ENCODE measurements at regions of chr12 and their contacts with region 1.

Region 1: GRCh38 chr12:4276524-4277204 is 3.1 kb downstream of the CCND2 start:
- H3K4me3 ChIP-seq: no peak overlapping the region
- H3K27ac ChIP-seq: no peak overlapping the region
- H3K4me1 ChIP-seq: peaks cover 18% of the 10 kb centered on the region
- CTCF ChIP-seq: peak; percentile 87

Region 2: GRCh38 chr12:3964439-3964838 is 312.2 kb before region 1 on chr12:
- CTCF ChIA-PET with region 1: interaction called, 17 read pairs
- POLR2A ChIA-PET with region 1: no interaction called
- H3K4me3 ChIP-seq: no peak overlapping the region
- H3K27ac ChIP-seq: no peak overlapping the region
- H3K4me1 ChIP-seq: no peaks in the 10 kb centered on the region
- CTCF ChIP-seq: no peak

Region 3: GRCh38 chr12:3998968-3999826 is 277.5 kb before region 1 on chr12:
- CTCF ChIA-PET with region 1: interaction called, 61 read pairs
- POLR2A ChIA-PET with region 1: interaction called, 3 read pairs
- H3K4me3 ChIP-seq: no peak overlapping the region
- H3K27ac ChIP-seq: no peak overlapping the region
- H3K4me1 ChIP-seq: no peaks in the 10 kb centered on the region
- CTCF ChIP-seq: no peak

Region 4: DNA sequence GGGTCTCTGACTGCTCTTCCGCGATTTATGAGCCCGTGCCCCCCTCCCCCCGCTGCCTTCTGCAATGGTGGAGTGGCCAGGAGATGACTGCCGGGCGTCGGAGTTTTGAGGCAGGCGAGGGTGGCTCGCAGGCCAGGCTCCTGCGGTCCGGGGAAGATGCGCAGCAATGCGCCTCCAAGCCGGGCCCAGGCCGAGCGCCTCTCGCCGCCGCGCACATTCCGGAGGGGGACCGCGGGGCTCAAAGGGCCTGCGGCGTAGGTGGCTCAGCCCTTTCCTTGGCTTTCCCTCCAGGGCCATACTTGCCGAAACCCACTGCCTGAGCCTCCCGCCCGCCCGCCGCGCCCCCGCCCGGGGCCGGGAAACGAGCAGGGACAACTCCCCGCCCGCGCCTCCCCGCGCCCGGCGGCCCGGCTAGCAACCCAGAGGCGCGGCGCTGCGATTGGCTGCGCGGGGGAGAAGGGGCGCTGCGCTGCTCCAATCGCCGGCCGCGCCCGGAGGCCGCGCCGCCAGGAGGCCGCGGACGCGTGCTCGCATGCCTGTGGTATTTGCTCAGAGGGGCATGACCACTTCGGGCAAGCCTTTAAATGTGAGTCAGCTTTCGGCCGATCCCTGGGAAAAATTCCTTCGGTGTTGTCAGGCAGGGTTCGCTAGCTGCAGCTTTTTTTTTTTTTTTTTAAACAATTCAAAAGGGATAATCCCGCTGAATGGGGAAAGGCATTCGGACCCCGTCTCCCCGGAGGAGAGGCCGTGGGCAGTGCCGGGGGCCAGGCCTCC is 245.5 kb before region 1 on chr12:
- CTCF ChIA-PET with region 1: interaction called, 39 read pairs
- POLR2A ChIA-PET with region 1: interaction called, 4 read pairs
- H3K4me3 ChIP-seq: peak overlapping the region; percentile 27
- H3K27ac ChIP-seq: peak overlapping the region; percentile 66; the same call in 1 of the 2 replicates
- H3K4me1 ChIP-seq: peaks cover 5% of the 10 kb centered on the region; the same call in 1 of the 2 replicates
- CTCF ChIP-seq: no peak

Region 5: GRCh38 chr12:4107436-4107878 is 169.2 kb before region 1 on chr12:
- CTCF ChIA-PET with region 1: interaction called, 37 read pairs
- POLR2A ChIA-PET with region 1: interaction called, 5 read pairs
- H3K4me3 ChIP-seq: no peak overlapping the region
- H3K27ac ChIP-seq: no peak overlapping the region
- H3K4me1 ChIP-seq: no peaks in the 10 kb centered on the region
- CTCF ChIP-seq: no peak

Region 6: DNA sequence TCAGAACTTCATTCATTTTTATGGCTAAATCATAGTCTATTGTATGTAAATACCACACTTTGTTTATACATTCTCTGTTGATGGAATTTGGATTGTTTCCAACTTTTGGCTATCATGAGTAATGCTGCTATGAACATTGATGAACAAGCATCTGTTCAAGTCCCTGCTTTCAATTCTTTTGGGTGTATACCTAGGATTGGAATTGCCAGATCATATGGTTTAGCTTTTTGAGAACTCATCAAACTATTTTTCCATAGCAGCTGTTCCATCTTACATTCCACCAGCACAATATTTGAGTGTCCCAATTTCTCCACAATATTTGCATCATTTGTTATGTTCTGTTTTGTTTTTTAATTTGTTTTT is 55.4 kb before region 1 on chr12:
- CTCF ChIA-PET with region 1: no interaction called
- POLR2A ChIA-PET with region 1: no interaction called
- H3K4me3 ChIP-seq: no peak overlapping the region
- H3K27ac ChIP-seq: no peak overlapping the region
- H3K4me1 ChIP-seq: no peaks in the 10 kb centered on the region
- CTCF ChIP-seq: no peak

Region 7: GRCh38 chr12:4287325-4288211 is 10.9 kb after region 1 on chr12:
- CTCF ChIA-PET with region 1: interaction called, 15 read pairs
- POLR2A ChIA-PET with region 1: interaction called, 3 read pairs
- H3K4me3 ChIP-seq: no peak overlapping the region
- H3K27ac ChIP-seq: no peak overlapping the region
- H3K4me1 ChIP-seq: no peaks in the 10 kb centered on the region
- CTCF ChIP-seq: no peak

Measured in HEK293 (cell line).